ENCODE measurements at regions of chr6 and their contacts with region 1.

Region 1: GRCh38 chr6:105424175-105424783 is 21.4 kb upstream of the PREP start:
- DNase-seq: no peak
- H3K4me3 ChIP-seq: no peak overlapping the region
- H3K27ac ChIP-seq: no peak overlapping the region
- H3K4me1 ChIP-seq: peaks cover 10% of the 10 kb centered on the region
- H3K27me3 ChIP-seq: no peaks in the 10 kb centered on the region
- CTCF ChIP-seq: peak; percentile 74

Region 2: DNA sequence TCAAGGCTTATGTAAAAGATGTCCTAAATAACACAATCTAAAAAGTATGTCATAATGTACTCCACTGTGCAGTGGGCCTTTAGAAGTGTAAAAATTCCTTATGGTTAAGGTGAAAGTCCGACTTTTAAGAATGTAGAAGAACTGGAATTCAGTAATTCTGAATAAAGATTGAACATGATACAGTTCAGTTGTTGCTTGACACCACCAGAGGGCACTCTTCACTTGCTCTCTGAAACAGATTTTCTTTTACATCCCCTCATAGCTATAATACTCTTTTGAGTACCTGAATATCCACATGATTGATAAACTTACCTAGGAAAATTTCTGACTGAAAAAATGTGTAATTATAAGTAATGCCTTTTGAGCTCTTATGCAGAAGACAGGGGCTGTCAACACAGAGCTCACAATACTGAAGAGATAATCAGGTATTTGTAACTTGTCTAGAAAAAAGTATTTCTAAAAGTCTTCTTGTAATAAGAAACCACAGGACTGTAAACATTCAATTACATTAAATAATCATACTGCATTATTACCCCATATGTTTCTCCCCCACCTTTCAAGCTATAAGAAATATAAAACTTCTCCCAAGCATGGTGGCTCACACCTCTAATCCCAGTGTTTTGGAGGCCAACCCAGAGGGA is 336.6 kb before region 1 on chr6:
- intact Hi-C with region 1: loop called (anchors 10 kb)
- DNase-seq: no peak
- H3K4me3 ChIP-seq: no peak overlapping the region
- H3K27ac ChIP-seq: no peak overlapping the region
- H3K4me1 ChIP-seq: peaks cover 8% of the 10 kb centered on the region
- H3K27me3 ChIP-seq: no peaks in the 10 kb centered on the region
- CTCF ChIP-seq: peak; percentile 93

Measured in left ventricle myocardium inferior (tissue), 1 donor.